ENCODE measurements at regions of chr18 and their contacts with region 1.

Region 1: DNA sequence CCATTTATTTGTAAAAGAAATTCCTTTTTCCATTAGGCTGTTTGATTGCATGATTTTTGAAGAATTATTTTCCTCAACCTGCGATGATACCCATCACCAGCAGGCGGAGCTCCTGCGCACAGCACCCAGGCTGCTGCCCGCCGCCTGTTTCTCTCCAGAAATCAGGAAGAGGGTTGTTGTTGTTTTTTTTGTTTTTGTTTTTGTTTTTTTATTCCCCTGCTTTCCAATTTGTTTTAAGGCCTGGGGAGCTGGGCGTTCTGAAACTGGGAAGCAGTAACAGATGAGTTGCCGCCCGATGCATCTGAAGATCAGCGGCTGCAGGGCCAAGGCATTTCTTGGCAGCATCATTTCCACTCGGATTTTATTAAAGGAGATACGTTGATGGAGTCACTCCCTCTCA is 132.1 kb downstream of the MBP start:
- DNase-seq: no peak
- H3K4me3 ChIP-seq: no peak overlapping the region
- H3K27ac ChIP-seq: no peak overlapping the region
- H3K27me3 ChIP-seq: peaks cover 13% of the 10 kb centered on the region
- CTCF ChIP-seq: peak; percentile 100

Region 2: DNA sequence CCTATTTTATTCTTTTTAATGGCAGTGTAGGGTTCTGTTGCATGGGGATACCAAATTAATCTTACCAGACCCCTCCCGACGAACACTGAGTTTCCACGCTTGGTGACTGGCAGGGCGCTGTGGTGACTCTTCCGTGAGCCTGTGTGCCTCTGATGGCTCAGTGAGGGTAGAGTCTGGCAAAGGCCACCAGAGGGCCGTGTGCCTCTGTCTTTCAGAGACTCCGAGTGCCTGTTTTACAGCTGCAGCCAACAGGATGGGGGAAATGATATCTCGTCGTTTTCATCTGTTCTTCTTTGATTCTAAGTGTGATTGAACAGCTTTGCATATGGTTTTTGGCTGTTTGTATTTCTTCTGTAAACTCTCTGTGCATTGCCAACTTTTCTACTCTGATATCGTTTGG is 78.4 kb before region 1 on chr18:
- CTCF ChIA-PET with region 1: interaction called, 11 read pairs
- POLR2A ChIA-PET with region 1: no interaction called
- DNase-seq: peak; percentile 10
- H3K4me3 ChIP-seq: no peak overlapping the region
- H3K27ac ChIP-seq: no peak overlapping the region
- H3K27me3 ChIP-seq: no peaks in the 10 kb centered on the region
- CTCF ChIP-seq: peak; percentile 72

Region 3: GRCh38 chr18:77013811-77014521 is 13.4 kb after region 1 on chr18:
- CTCF ChIA-PET with region 1: interaction called, 69 read pairs
- POLR2A ChIA-PET with region 1: no interaction called
- DNase-seq: no peak
- H3K4me3 ChIP-seq: no peak overlapping the region
- H3K27ac ChIP-seq: no peak overlapping the region
- H3K27me3 ChIP-seq: no peaks in the 10 kb centered on the region
- CTCF ChIP-seq: no peak

Region 4: GRCh38 chr18:77046409-77046808 is 45.9 kb after region 1 on chr18:
- CTCF ChIA-PET with region 1: interaction called, 10 read pairs
- POLR2A ChIA-PET with region 1: no interaction called
- DNase-seq: no peak
- H3K4me3 ChIP-seq: no peak overlapping the region
- H3K27ac ChIP-seq: no peak overlapping the region
- H3K27me3 ChIP-seq: no peaks in the 10 kb centered on the region
- CTCF ChIP-seq: no peak

Region 5: DNA sequence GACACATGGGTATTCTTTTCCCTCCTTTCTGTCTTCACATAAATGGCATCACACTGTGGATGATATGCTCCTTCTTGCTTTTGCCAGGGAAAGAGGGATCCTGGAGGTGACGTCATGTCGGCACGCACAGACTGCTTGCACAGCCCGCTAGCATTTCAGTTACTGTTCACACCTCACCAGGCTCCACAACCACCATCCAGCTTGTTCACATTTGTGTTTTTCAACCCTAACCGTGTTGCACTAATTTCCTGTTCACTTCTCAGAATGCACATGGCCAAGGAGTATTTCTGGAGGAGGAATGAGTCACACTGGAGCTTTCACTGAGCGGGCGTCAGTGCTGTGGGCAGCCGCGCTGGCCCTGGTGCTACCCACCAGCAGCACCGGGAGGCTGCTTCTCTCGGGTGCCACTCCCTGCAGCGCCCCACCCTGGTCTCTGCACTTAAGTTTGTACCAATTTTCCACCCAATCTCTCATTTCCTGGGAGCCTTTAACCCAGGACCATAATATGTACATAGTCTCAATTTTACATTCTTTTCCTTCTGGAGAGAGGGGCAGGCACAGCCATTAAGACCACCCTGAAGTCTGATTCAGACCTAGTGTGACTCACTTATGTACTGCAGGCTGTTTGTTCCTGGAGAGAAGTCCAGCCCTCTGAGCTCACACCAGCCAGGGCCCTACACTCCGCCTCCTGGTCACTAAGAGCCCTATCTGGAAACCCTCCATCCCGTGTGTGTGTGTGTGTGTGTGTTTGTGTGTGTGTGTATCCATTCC is 66.9 kb after region 1 on chr18:
- CTCF ChIA-PET with region 1: interaction called, 11 read pairs
- POLR2A ChIA-PET with region 1: no interaction called
- DNase-seq: peak; percentile 64
- H3K4me3 ChIP-seq: no peak overlapping the region
- H3K27ac ChIP-seq: peak overlapping the region; percentile 78
- H3K27me3 ChIP-seq: no peaks in the 10 kb centered on the region
- CTCF ChIP-seq: 0 out of 2 replicates have a peak, but pooled peaks have one; percentile 17

Region 6: GRCh38 chr18:77207540-77207939 is 207.0 kb after region 1 on chr18:
- CTCF ChIA-PET with region 1: interaction called, 104 read pairs
- POLR2A ChIA-PET with region 1: no interaction called
- DNase-seq: peak; percentile 27
- H3K4me3 ChIP-seq: no peak overlapping the region
- H3K27ac ChIP-seq: peak overlapping the region; percentile 11
- H3K27me3 ChIP-seq: no peaks in the 10 kb centered on the region
- CTCF ChIP-seq: peak; percentile 71